Activated CD8-positive, alpha-beta T cell treated with anti-CD3 and anti-CD28 coated beads for 36 hours (primary cell): ENCODE measurements at regions of chr6 and their contacts with region 1.

Region 1: GRCh38 chr6:111804627-111805235 is 68.5 kb downstream of the FYN start:
- DNase-seq: peak; percentile 94
- ATAC-seq: peak; percentile 57
- H3K4me3 Mint-ChIP-seq: peak overlapping the region; percentile 63
- H3K27ac Mint-ChIP-seq: peak overlapping the region; percentile 99
- H3K4me1 Mint-ChIP-seq: peaks cover 95% of the 10 kb centered on the region
- H3K27me3 Mint-ChIP-seq: no peaks in the 10 kb centered on the region
- CTCF ChIP-seq: no peak

Region 2: DNA sequence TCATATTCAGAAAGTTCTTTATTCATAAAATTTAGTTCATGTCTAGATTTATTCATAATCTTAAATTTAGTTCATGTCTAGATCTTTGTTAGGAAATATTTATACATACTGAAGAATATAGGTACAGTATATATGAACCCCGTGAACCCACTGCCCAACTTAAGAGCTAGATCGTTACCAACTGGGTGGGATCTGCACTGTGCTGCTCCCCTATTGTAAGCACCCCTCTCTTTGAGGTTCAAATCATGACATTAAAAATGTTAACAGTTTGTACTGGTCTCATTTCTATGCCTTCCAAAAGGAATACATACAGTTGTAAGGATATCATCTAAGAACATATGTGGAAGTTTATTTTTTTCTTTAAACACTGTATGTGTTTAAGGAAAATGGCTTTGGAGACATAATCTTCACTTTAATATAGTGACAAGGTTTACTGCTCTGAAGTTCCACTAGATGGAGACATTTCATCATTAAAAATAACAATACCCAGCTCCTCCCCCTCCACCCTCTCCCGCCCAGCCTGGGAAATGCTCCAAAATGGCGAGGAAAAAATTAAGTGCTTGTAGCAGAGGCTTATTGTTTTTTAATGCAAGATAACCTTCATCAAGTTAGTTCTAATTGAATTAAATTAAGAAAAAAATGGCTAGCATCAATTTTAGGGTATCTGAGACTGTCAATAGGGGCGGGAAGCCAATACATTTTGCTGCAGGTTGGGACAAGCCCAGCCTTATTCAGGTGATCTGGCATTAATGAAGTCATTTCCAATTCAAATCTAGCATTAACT is 94.9 kb before region 1 on chr6:
- CTCF ChIA-PET with region 1: interaction called, 16 read pairs
- POLR2A ChIA-PET with region 1: no interaction called
- intact Hi-C with region 1: no loop called
- DNase-seq: peak; percentile 67
- ATAC-seq: peak; percentile 79
- H3K4me3 Mint-ChIP-seq: no peak overlapping the region
- H3K27ac Mint-ChIP-seq: peak overlapping the region; percentile 92
- H3K4me1 Mint-ChIP-seq: peaks cover 63% of the 10 kb centered on the region
- H3K27me3 Mint-ChIP-seq: no peaks in the 10 kb centered on the region
- CTCF ChIP-seq: peak; percentile 73

Region 3: GRCh38 chr6:111793711-111794111 is 11.0 kb before region 1 on chr6:
- CTCF ChIA-PET with region 1: interaction called, 5 read pairs
- POLR2A ChIA-PET with region 1: interaction called, 23 read pairs
- intact Hi-C with region 1: no loop called
- DNase-seq: peak; percentile 84
- ATAC-seq: peak; percentile 72
- H3K4me3 Mint-ChIP-seq: peak overlapping the region; percentile 73
- H3K27ac Mint-ChIP-seq: peak overlapping the region; percentile 95
- H3K4me1 Mint-ChIP-seq: peaks cover 71% of the 10 kb centered on the region
- H3K27me3 Mint-ChIP-seq: no peaks in the 10 kb centered on the region
- CTCF ChIP-seq: no peak

Region 4: GRCh38 chr6:111837641-111838500 is 33.1 kb after region 1 on chr6:
- CTCF ChIA-PET with region 1: interaction called, 12 read pairs
- POLR2A ChIA-PET with region 1: interaction called, 22 read pairs
- intact Hi-C with region 1: loop called (anchors 1 kb)
- DNase-seq: peak; percentile 81
- ATAC-seq: peak; percentile 77
- H3K4me3 Mint-ChIP-seq: peak overlapping the region; percentile 67
- H3K27ac Mint-ChIP-seq: no peak overlapping the region
- H3K4me1 Mint-ChIP-seq: peaks cover 73% of the 10 kb centered on the region
- H3K27me3 Mint-ChIP-seq: no peaks in the 10 kb centered on the region
- CTCF ChIP-seq: no peak

Region 5: GRCh38 chr6:111873178-111874024 is 68.7 kb after region 1 on chr6 and contains the start of gene FYN:
- CTCF ChIA-PET with region 1: interaction called, 3 read pairs
- POLR2A ChIA-PET with region 1: interaction called, 29 read pairs
- intact Hi-C with region 1: loop called (anchors 2 kb)
- DNase-seq: peak; percentile 100
- ATAC-seq: peak; percentile 86
- H3K4me3 Mint-ChIP-seq: peak within 1 kb of the TSS; percentile 98
- H3K27ac Mint-ChIP-seq: peak within 1 kb of the TSS; percentile 98
- H3K4me1 Mint-ChIP-seq: peaks cover 30% of the 10 kb centered on the region
- H3K27me3 Mint-ChIP-seq: no peaks in the 10 kb centered on the region
- CTCF ChIP-seq: peak; percentile 45
- total RNA-seq, gene FYN: 384 to 386 TPM